Activated T-helper 1 cell treated with anti-CD3 and anti-CD28 coated beads, Interleukin-12 subunit alpha, Interleukin-12 subunit beta, Interleukin-2, Interleukin-4 antibody, amounts not matched to agents 30 ng/mL and 10 ng/mL and 1 ng/mL, durations not matched to agents 14 hours and 24 hours and 36 hours (primary cell): ENCODE measurements at regions of chr1 and their contacts with region 1.

Region 1: DNA sequence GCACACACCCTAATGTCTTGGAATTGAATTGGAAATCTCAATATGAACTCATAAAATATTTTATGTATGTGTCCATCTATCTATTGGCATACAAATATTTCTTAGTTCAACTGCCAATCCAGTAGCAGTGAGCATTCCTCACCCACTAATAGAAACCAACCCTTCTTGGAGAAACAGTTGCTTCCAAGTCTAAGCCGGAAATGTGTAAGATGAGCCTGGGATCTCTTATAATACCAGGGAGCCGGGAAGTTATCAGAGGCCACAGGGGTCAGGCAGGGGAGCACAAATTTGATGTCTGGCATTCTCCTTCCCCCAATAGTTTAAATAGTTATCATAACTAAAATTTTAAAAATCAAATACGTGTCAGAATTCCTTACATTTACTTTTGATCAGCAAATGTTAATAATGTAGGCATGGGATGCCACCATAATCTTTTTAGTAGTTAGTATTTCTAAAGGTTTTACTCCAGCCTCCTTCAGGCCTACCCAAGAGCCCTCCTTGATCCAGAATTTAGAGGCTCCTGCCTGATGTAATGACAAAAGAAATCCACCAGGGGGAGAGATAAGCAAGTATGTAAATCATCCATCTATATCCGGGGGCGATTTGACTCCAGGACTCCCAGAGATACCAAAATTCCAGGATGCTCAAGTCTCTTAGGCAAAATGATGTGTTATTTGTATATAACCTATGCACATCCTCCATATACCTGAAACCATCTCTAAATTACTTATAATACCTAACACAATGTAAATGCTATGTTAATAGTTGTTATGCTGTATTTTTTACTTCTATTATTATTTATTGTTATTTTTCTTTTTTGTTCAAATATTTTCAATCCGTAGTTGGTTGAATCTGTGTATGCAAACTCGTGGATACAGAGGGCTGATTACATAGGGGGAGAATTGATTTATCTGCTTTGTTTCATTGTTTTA is 218.7 kb upstream of the COA6 start:
- DNase-seq: no peak
- H3K4me3 Mint-ChIP-seq: no peak overlapping the region
- H3K27ac Mint-ChIP-seq: no peak overlapping the region
- H3K4me1 Mint-ChIP-seq: no peaks in the 10 kb centered on the region
- H3K27me3 Mint-ChIP-seq: peaks cover 13% of the 10 kb centered on the region

Region 2: DNA sequence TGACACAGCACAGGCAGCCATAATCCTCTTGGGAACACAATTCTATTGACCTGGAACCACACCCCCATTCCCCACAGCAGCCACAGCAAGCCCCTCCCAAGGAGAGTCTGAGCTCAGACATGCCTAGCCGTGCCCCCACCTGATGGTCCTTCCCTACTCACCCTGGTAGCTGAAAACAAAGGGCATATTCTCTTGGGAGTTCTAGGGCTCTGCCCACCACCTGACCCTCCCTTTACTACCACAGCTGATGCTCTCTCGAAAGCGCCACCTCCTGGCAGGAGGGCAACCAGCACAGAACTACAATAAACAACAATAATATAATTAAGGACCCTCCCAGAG is 33.8 kb after region 1 on chr1:
- intact Hi-C with region 1: loop called (anchors 2 kb)
- DNase-seq: no peak
- H3K4me3 Mint-ChIP-seq: no peak overlapping the region
- H3K27ac Mint-ChIP-seq: no peak overlapping the region
- H3K4me1 Mint-ChIP-seq: no peaks in the 10 kb centered on the region
- H3K27me3 Mint-ChIP-seq: peaks cover 37% of the 10 kb centered on the region

Region 3: GRCh38 chr1:234309598-234310459 is 155.2 kb after region 1 on chr1:
- intact Hi-C with region 1: loop called (anchors 1 kb)
- DNase-seq: peak; percentile 47
- H3K4me3 Mint-ChIP-seq: no peak overlapping the region
- H3K27ac Mint-ChIP-seq: peak overlapping the region; percentile 5
- H3K4me1 Mint-ChIP-seq: peaks cover 14% of the 10 kb centered on the region
- H3K27me3 Mint-ChIP-seq: peaks cover 1% of the 10 kb centered on the region

Region 4: GRCh38 chr1:234326497-234327366 is 172.1 kb after region 1 on chr1:
- intact Hi-C with region 1: loop called (anchors 1 kb)
- DNase-seq: peak; percentile 53
- H3K4me3 Mint-ChIP-seq: peak overlapping the region; percentile 60
- H3K27ac Mint-ChIP-seq: peak overlapping the region; percentile 33
- H3K4me1 Mint-ChIP-seq: peaks cover 34% of the 10 kb centered on the region
- H3K27me3 Mint-ChIP-seq: peaks cover 25% of the 10 kb centered on the region